IMR-90 (cell line): ENCODE measurements at regions of chr3 and their contacts with region 1.

Region 1: DNA sequence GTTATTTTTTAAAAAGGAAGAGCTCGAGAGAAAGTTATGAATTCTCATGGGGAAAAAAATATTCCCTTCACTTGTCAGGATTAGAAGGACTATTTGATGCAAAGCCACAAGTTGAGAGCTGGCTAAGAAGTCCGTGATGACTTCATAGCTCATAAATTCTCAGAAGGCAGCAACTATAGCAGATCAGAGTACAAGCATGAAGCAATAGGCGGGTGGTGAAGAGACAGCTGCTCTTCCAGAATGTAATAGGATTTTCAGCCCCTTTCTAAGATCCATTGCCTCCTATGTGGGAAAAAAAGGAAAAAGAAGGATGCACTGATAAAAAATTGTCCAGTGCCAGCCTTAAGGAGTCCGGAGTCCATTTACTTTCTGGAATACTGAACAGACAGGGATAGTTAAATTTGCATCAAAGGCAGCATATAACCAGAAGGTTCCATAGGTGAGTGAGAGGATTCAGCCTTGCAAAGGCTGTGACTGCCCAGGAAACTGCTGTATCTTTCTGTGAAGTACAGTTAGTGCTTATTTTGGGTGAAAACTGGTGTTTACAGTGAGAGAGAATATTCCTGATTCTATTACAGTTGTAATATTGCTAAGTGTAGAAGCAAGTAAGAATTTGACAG is 929.5 kb upstream of the ALCAM start:
- DNase-seq: peak; percentile 53
- ATAC-seq: peak; percentile 56
- H3K4me3 ChIP-seq: no peak overlapping the region
- H3K27ac ChIP-seq: no peak overlapping the region
- H3K4me1 ChIP-seq: no peaks in the 10 kb centered on the region
- H3K27me3 ChIP-seq: no peaks in the 10 kb centered on the region
- CTCF ChIP-seq: no peak
- POLR2A ChIP-seq: no peak
- RAD21 ChIP-seq: no peak

Region 2: DNA sequence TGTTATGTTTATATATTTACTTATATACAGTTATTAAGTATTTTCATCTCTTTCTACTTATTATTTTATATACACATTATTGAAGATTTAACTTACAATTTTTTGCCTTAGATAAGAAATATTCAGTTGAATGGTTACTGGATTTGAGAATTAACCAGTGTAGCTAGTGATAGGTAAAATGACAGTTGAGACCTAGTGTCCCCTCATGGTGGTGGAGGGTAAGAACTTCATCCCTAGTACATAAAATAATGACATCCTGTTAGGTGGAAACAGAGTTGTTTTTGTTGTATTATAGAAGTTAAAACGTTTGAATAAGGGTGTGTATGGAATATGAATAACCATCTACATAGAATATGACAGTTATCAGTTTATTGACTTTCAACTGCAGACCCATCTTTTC is 223.0 kb before region 1 on chr3:
- CTCF ChIA-PET with region 1: no interaction called
- POLR2A ChIA-PET with region 1: no interaction called
- dilution Hi-C with region 1: no loop called
- in situ Hi-C with region 1: no loop called
- intact Hi-C with region 1: no loop called
- DNase-seq: no peak
- ATAC-seq: no peak
- H3K4me3 ChIP-seq: no peak overlapping the region
- H3K27ac ChIP-seq: no peak overlapping the region
- H3K4me1 ChIP-seq: no peaks in the 10 kb centered on the region
- H3K27me3 ChIP-seq: no peaks in the 10 kb centered on the region
- CTCF ChIP-seq: no peak
- POLR2A ChIP-seq: no peak
- RAD21 ChIP-seq: no peak

Region 3: GRCh38 chr3:104648823-104649222 is 211.6 kb after region 1 on chr3:
- CTCF ChIA-PET with region 1: no interaction called
- POLR2A ChIA-PET with region 1: no interaction called
- dilution Hi-C with region 1: no loop called
- in situ Hi-C with region 1: no loop called
- intact Hi-C with region 1: loop called (anchors 10 kb)
- DNase-seq: no peak
- ATAC-seq: no peak
- H3K4me3 ChIP-seq: no peak overlapping the region
- H3K27ac ChIP-seq: no peak overlapping the region
- H3K4me1 ChIP-seq: no peaks in the 10 kb centered on the region
- H3K27me3 ChIP-seq: no peaks in the 10 kb centered on the region
- CTCF ChIP-seq: no peak
- POLR2A ChIP-seq: no peak
- RAD21 ChIP-seq: no peak